Gastrocnemius medialis (tissue), 4 donors: ENCODE measurements at regions of chr22 and their contacts with region 1.

Region 1: GRCh38 chr22:31526270-31526669 is 29.9 kb downstream of the SFI1 start:
- DNase-seq: no peak
- ATAC-seq: no peak
- H3K4me3 ChIP-seq: no peak overlapping the region
- H3K27ac ChIP-seq: no peak overlapping the region
- H3K4me1 ChIP-seq: no peaks in the 10 kb centered on the region
- H3K27me3 ChIP-seq: no peaks in the 10 kb centered on the region
- CTCF ChIP-seq: no peak
- POLR2A ChIP-seq: no peak

Region 2: DNA sequence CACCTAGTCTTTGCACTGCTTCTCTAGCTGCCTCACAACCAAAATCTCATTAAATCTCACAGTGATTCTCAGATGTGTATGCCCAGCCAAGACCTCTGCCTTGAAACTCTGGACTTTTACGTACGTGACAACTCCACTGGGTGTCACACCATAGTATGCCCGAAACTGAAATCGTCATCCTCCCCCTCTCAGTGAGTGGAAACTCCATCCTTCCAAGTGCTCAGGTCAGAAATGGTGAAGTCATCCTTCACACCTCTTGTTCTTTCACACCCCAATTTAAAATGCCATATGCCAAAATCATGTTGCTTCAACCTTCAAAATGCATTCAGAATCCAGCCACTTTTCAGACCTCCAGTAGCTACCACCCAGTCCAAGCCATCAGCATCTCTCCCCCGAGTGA is 12.5 kb after region 1 on chr22:
- in situ Hi-C with region 1: no loop called
- intact Hi-C with region 1: no loop called
- DNase-seq: no peak
- ATAC-seq: no peak
- H3K4me3 ChIP-seq: no peak overlapping the region
- H3K27ac ChIP-seq: no peak overlapping the region
- H3K4me1 ChIP-seq: no peaks in the 10 kb centered on the region
- H3K27me3 ChIP-seq: no peaks in the 10 kb centered on the region
- CTCF ChIP-seq: no peak
- POLR2A ChIP-seq: no peak

Region 3: DNA sequence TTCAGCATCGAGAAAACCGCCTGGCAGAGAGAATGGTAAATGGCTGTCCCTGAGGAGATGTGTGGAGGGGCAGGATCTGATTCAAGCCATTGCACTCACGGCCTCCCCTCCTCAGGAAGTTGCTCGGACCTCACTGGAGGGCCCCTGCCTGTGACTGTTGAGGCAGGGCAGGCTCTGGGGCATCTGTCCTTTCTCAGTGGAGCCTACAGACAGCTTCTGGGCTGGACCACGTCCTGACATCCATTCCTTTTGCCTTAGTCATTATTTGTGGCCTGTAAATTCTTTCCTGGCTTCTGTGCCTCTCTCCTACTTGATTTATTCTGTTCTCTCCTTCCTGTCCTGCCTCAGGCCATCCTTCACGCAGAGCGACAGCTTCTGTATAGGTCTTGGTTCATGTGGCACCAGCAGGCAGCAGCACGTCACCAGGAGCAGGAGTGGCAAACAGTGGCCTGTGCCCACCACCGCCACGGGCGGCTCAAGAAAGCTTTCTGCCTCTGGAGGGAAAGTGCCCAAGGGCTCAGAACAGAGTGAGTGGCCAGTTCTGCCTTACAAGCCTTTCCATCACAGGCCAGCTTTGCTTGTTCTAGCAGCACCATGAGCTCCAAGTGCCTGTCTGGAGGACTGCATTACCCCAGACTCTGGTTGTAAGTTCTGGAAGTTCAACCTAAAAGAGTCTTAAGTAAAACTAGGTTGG is 76.1 kb after region 1 on chr22:
- in situ Hi-C with region 1: no loop called
- intact Hi-C with region 1: no loop called
- DNase-seq: no peak
- ATAC-seq: no peak
- H3K4me3 ChIP-seq: no peak overlapping the region
- H3K27ac ChIP-seq: no peak overlapping the region
- H3K4me1 ChIP-seq: no peaks in the 10 kb centered on the region
- H3K27me3 ChIP-seq: no peaks in the 10 kb centered on the region
- CTCF ChIP-seq: no peak
- POLR2A ChIP-seq: no peak

Region 4: DNA sequence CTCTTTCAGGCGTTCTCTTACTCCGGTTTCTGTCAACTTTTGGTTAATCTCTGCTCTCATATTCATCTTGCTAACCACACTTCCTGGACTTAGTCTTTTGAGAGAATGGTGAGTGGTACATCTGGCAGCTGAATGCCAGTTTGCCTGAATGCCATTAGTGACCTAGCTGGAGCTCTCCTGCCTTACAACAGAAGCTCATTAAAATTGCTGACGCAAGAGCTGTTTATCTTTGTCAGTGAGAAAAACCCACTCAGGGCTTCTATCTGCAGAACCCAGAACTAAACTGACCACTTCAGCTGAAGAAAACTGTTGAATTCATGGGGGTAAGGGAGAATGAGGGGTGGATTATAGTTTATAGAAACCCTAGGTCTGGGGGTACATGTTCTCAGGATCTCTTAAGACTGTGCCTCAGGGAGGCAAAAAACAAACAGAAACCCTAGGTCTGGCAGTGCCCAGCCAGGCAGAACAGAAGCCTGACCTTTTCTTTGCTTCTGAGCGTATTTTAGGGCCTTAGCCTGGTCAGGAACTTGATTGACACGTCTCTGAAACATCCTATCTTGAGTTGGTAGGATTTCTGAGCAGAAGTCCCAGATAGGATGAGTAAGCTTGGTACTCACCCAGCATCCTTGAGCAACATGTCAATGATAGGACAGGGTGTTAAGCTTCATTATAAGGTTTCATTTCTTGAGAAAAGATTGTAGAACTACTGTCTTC is 365.3 kb after region 1 on chr22:
- in situ Hi-C with region 1: no loop called
- intact Hi-C with region 1: loop called (anchors 5 kb)
- DNase-seq: peak in 1 of 2 donors; percentile 13
- ATAC-seq: peak; percentile 92
- H3K4me3 ChIP-seq: no peak overlapping the region
- H3K27ac ChIP-seq: no peak overlapping the region
- H3K4me1 ChIP-seq: no peaks in the 10 kb centered on the region
- H3K27me3 ChIP-seq: no peaks in the 10 kb centered on the region
- CTCF ChIP-seq: no peak
- POLR2A ChIP-seq: no peak